WTC11 (cell line): ENCODE measurements at regions of chr1 and their contacts with region 1.

Region 1: DNA sequence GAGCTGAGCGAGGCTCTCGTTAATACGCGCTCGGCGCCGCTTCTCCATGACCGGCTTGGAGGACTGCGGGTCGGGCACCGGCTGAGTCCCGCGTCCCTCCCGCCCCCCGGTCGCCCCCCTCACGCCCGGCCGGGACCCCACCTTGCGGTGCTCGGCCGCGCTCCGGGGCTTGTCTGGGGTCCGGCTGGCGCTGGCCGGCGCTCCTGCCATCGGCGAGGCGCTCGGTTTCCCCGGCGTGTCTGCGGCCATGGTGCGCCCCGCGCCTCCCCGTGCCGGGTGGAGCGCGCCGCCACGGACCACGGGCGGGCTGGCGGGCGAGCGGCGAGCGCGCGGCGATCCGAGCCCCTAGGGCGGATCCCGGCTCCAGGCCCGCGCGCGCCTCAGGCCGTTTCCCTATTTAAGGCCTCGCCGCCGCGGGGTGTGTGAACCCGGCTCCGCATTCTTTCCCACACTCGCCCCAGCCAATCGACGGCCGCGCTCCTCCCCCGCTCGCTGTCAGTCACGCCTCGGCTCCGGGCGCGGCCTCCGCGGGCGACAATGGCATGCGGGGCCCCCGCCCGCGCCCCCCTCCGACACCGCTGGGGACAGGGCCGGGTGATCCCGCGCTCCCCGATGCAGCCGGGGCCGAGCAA is at the start of gene HES4:
- DNase-seq: peak; percentile 92
- ATAC-seq: peak; percentile 51
- H3K4me3 Mint-ChIP-seq: peak within 1 kb of the TSS; percentile 70
- H3K27ac Mint-ChIP-seq: peak within 1 kb of the TSS; percentile 92; the same call in 1 of the 2 replicates
- H3K4me1 Mint-ChIP-seq: peaks cover 10% of the 10 kb centered on the region
- H3K27me3 Mint-ChIP-seq: peaks cover 76% of the 10 kb centered on the region
- CTCF ChIP-seq: no peak
- total RNA-seq, gene HES4: 4.5 to 10.7 TPM (median 8.3 TPM) in 3 replicates

Region 2: DNA sequence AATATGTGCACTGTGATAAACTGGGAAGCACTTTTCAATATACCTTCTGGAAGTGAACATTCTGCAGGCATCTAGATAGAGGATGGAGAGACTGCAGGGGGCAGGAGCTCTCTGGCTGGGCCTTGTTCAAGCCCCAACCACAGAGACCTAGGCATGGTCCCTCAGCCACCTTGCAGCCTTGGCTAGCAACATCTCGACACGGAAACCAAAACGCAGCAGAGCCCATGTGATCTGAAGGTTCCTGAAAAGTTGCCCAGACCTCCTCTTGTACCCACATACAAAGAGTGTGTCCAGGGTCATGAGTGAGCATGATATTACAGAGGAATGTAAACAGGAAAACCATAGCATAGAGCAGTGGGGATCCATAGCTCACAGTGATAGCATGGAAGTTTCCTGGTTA is 109.2 kb before region 1 on chr1:
- CTCF ChIA-PET with region 1: no interaction called
- POLR2A ChIA-PET with region 1: no interaction called
- DNase-seq: no peak
- ATAC-seq: no peak
- H3K4me3 Mint-ChIP-seq: no peak overlapping the region
- H3K27ac Mint-ChIP-seq: no peak overlapping the region
- H3K4me1 Mint-ChIP-seq: peaks cover 4% of the 10 kb centered on the region
- H3K27me3 Mint-ChIP-seq: peaks cover 54% of the 10 kb centered on the region
- CTCF ChIP-seq: no peak

Region 3: DNA sequence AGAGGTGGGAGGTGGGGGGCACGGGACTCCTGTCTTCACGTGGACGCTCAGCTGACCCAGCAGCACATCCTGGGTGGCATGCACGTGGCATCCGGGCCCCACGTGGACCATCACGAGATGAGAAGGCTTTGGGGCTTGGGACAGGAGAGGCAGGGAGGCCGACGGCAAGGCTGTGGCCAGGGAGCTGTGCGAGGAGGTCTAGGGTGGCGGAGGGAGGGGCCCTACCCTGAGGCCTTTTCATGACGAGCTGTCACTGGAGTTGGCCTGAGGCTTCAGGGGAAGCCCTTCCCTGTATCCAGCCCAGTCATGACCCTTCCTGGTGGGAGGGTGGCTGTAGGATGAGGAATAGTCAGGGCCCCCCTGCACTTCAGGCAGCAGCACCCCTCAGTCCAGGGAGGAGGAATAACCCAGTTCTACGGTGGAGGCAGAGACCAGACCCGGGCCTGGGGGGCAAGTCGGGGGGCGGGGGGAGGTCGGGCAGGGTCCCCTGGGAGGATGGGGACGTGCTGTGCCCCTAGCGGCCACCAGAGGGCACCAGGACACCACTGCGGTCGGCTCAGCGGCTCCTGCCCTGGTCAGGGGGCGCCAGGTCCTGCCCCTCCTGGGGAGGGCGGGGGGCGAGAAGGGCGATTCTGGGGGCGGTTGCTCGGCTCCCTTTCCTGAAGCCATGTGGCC is 15.9 kb before region 1 on chr1:
- CTCF ChIA-PET with region 1: interaction called, 47 read pairs
- POLR2A ChIA-PET with region 1: no interaction called
- DNase-seq: peak; percentile 85
- ATAC-seq: peak; percentile 92
- H3K4me3 Mint-ChIP-seq: no peak overlapping the region
- H3K27ac Mint-ChIP-seq: no peak overlapping the region
- H3K4me1 Mint-ChIP-seq: no peaks in the 10 kb centered on the region
- H3K27me3 Mint-ChIP-seq: peaks cover 59% of the 10 kb centered on the region
- CTCF ChIP-seq: peak; percentile 98

Region 4: DNA sequence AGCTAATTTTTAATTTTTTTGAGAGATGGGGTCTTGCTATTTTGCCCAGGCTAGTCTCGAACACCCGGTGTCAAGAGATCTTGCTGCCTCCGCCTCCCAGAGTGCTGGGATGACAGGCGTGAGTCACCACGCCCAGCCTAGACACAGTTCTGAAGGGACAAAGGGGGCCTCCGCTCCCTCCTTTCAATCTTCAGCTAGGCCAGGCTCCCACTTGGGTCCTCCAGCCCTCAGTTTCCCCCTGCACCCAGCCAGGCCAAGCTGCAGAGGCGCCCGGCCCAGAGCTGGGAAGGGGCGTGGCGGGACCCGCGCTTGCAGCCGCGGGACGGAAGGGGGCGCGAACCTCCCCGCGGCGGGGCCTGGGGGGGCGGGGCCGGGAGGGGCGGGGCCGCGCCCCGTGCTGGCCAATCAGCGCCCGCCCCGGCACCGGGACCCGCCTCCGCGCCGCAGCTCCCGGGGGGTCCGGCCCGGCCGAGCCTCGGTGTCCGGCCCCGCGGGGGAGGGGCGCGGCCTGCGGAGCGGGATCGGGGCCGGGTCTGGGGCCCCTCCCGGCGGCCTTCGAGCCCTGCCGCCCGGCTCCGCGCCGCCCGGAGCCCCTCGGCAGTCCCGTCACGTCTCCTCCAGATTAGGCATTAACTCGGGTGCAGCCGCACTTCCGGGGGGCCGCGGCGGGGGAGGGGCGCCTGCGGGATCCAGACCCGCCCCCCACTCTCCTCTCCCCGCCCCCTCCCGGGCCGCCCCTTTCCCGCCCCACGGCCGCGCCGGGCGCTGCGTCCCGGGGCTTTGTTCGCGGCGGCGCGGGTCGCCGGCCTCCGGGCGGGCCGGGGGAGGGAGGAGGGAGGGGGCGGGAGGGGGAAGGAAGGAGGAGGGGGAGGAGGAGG is 19.5 kb after region 1 on chr1:
- CTCF ChIA-PET with region 1: interaction called, 40 read pairs
- POLR2A ChIA-PET with region 1: interaction called, 11 read pairs
- DNase-seq: peak; percentile 78
- ATAC-seq: peak; percentile 79
- H3K4me3 Mint-ChIP-seq: peak overlapping the region; percentile 34
- H3K27ac Mint-ChIP-seq: no peak overlapping the region
- H3K4me1 Mint-ChIP-seq: peaks cover 37% of the 10 kb centered on the region
- H3K27me3 Mint-ChIP-seq: peaks cover 17% of the 10 kb centered on the region
- CTCF ChIP-seq: no peak

Region 5: GRCh38 chr1:1033009-1033587 is 33.3 kb after region 1 on chr1:
- CTCF ChIA-PET with region 1: interaction called, 19 read pairs
- POLR2A ChIA-PET with region 1: no interaction called
- DNase-seq: peak; percentile 98
- ATAC-seq: peak; percentile 90
- H3K4me3 Mint-ChIP-seq: 0 out of 2 replicates have a peak overlapping the region, but pooled peaks have one; percentile 22
- H3K27ac Mint-ChIP-seq: no peak overlapping the region
- H3K4me1 Mint-ChIP-seq: peaks cover 10% of the 10 kb centered on the region
- H3K27me3 Mint-ChIP-seq: peaks cover 31% of the 10 kb centered on the region
- CTCF ChIP-seq: peak; percentile 76

Region 6: DNA sequence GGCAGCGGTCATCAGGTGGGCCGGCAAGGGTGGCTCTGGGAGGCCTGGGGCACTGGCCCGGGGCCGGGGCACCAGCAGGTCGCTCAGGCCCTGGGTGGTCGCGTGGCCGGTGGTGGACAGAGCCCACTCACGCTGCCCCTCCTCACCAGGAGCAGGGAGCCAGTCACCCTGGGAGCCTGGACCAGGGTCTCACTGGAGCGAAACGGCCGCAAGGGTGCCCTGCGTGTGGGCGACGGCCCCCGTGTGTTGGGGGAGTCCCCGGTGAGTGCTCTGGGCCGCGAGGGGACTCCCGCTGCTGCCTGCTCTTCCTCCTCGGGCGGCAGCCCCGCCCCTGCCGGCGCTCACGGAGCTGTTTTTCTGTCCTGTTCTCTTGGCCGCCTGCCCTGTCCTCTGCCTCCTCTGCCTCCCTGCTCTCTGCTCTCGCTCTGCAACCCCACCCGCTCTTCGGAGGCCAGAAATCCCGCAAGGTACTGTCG is 50.8 kb after region 1 on chr1:
- CTCF ChIA-PET with region 1: no interaction called
- POLR2A ChIA-PET with region 1: no interaction called
- DNase-seq: no peak
- ATAC-seq: peak; percentile 11; the same call in 1 of the 2 replicates
- H3K4me3 Mint-ChIP-seq: no peak overlapping the region
- H3K27ac Mint-ChIP-seq: no peak overlapping the region
- H3K4me1 Mint-ChIP-seq: no peaks in the 10 kb centered on the region
- H3K27me3 Mint-ChIP-seq: no peaks in the 10 kb centered on the region
- CTCF ChIP-seq: no peak